ENCODE measurements at regions of chr6 and their contacts with region 1.

Region 1: DNA sequence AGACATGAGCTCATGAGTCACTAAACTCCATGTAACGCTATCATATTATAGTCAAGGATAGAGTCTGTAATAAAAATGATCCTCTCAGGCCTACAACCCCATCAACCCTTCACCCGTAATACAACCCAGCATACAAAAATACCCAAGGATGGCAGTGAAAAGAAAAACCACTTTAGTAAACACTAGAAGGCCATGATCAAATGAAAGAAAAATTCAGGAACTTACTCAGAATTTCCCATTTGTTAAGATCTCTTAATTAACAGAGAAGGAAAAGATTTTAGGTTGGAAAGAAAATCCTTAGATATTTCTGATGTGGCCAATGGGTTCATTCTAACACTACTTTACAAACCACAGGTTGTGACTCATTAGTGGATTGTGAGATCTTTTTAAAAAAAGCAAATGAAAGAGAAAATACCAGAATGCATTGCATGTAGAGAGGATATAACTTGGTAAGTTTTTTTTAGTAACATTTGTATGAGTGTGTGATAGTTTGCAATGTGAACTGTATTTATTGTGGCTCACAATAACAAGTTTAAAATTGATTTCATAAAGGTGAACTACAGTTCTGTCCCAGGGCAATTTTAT is 8.0 kb upstream of the UBE2J1 start:
- DNase-seq: no peak
- ATAC-seq: peak; percentile 77
- H3K4me3 ChIP-seq: peak overlapping the region; percentile 10; the same call in 1 of the 2 replicates
- H3K27ac ChIP-seq: peak overlapping the region; percentile 90
- H3K4me1 ChIP-seq: peaks cover 64% of the 10 kb centered on the region
- H3K27me3 ChIP-seq: no peaks in the 10 kb centered on the region
- CTCF ChIP-seq: no peak
- EP300 ChIP-seq: peak; percentile 26 to 80; a peak in 2 of 4 replicates
- POLR2A ChIP-seq: no peak
- RAD21 ChIP-seq: no peak

Region 2: GRCh38 chr6:88899569-88900316 is 460.8 kb before region 1 on chr6:
- CTCF ChIA-PET with region 1: no interaction called
- POLR2A ChIA-PET with region 1: no interaction called
- RAD21 ChIA-PET with region 1: no interaction called
- SMC1A ChIA-PET with region 1: no interaction called
- in situ Hi-C with region 1: no loop called
- intact Hi-C with region 1: no loop called
- DNase-seq: no peak
- ATAC-seq: peak; percentile 50; the same call in 2 of the 3 replicates
- H3K4me3 ChIP-seq: no peak overlapping the region
- H3K27ac ChIP-seq: no peak overlapping the region
- H3K4me1 ChIP-seq: no peaks in the 10 kb centered on the region
- H3K27me3 ChIP-seq: no peaks in the 10 kb centered on the region
- CTCF ChIP-seq: peak in 2 of 3 experiments; percentile 24 to 36; a peak in 2 of 6 replicates
- EP300 ChIP-seq: no peak
- POLR2A ChIP-seq: no peak
- RAD21 ChIP-seq: no peak

Region 3: GRCh38 chr6:89346436-89346835 is 14.1 kb before region 1 on chr6:
- CTCF ChIA-PET with region 1: interaction called, 260 read pairs
- POLR2A ChIA-PET with region 1: interaction called, 51 read pairs
- RAD21 ChIA-PET with region 1: interaction called, 187 read pairs
- SMC1A ChIA-PET with region 1: interaction called, 252 read pairs
- in situ Hi-C with region 1: no loop called
- intact Hi-C with region 1: no loop called
- DNase-seq: no peak
- ATAC-seq: no peak
- H3K4me3 ChIP-seq: no peak overlapping the region; the same call in 1 of the 2 replicates
- H3K27ac ChIP-seq: peak overlapping the region; percentile 29; the same call in 1 of the 2 replicates
- H3K4me1 ChIP-seq: peaks cover 43% of the 10 kb centered on the region
- H3K27me3 ChIP-seq: no peaks in the 10 kb centered on the region
- CTCF ChIP-seq: no peak
- EP300 ChIP-seq: no peak
- POLR2A ChIP-seq: no peak
- RAD21 ChIP-seq: no peak

Region 4: GRCh38 chr6:89536231-89536630 is 175.7 kb after region 1 on chr6:
- CTCF ChIA-PET with region 1: no interaction called
- POLR2A ChIA-PET with region 1: no interaction called
- RAD21 ChIA-PET with region 1: no interaction called
- SMC1A ChIA-PET with region 1: no interaction called
- in situ Hi-C with region 1: no loop called
- intact Hi-C with region 1: no loop called
- DNase-seq: no peak
- ATAC-seq: peak; percentile 26; the same call in 1 of the 3 replicates
- H3K4me3 ChIP-seq: no peak overlapping the region
- H3K27ac ChIP-seq: no peak overlapping the region
- H3K4me1 ChIP-seq: no peaks in the 10 kb centered on the region
- H3K27me3 ChIP-seq: no peaks in the 10 kb centered on the region
- CTCF ChIP-seq: no peak
- EP300 ChIP-seq: no peak
- POLR2A ChIP-seq: no peak
- RAD21 ChIP-seq: no peak

Region 5: GRCh38 chr6:90650041-90650940 is 1289.8 kb after region 1 on chr6:
- CTCF ChIA-PET with region 1: no interaction called
- POLR2A ChIA-PET with region 1: no interaction called
- RAD21 ChIA-PET with region 1: no interaction called
- SMC1A ChIA-PET with region 1: no interaction called
- in situ Hi-C with region 1: no loop called
- intact Hi-C with region 1: no loop called
- DNase-seq: no peak
- ATAC-seq: no peak
- H3K4me3 ChIP-seq: no peak overlapping the region
- H3K27ac ChIP-seq: no peak overlapping the region
- H3K4me1 ChIP-seq: no peaks in the 10 kb centered on the region
- H3K27me3 ChIP-seq: no peaks in the 10 kb centered on the region
- CTCF ChIP-seq: no peak
- EP300 ChIP-seq: no peak
- POLR2A ChIP-seq: no peak
- RAD21 ChIP-seq: no peak